Activated CD4-positive, alpha-beta T cell treated with anti-CD3 and anti-CD28 coated beads, Interleukin-2, amount 10 ng/mL, durations not matched to agents 7 days and 5 days (primary cell): ENCODE measurements at regions of chr14 and their contacts with region 1.

Region 1: GRCh38 chr14:96798956-96799355 is 1.8 kb downstream of the VRK1 start:
- DNase-seq: no peak
- H3K4me3 Mint-ChIP-seq: peak overlapping the region; percentile 87
- H3K27ac Mint-ChIP-seq: no peak overlapping the region
- H3K4me1 Mint-ChIP-seq: peaks cover 48% of the 10 kb centered on the region
- H3K27me3 Mint-ChIP-seq: no peaks in the 10 kb centered on the region

Region 2: GRCh38 chr14:96658611-96659010 is 140.3 kb before region 1 on chr14:
- CTCF ChIA-PET with region 1: no interaction called
- POLR2A ChIA-PET with region 1: no interaction called
- DNase-seq: no peak
- H3K4me3 Mint-ChIP-seq: no peak overlapping the region
- H3K27ac Mint-ChIP-seq: no peak overlapping the region
- H3K4me1 Mint-ChIP-seq: no peaks in the 10 kb centered on the region
- H3K27me3 Mint-ChIP-seq: peaks cover 27% of the 10 kb centered on the region

Region 3: DNA sequence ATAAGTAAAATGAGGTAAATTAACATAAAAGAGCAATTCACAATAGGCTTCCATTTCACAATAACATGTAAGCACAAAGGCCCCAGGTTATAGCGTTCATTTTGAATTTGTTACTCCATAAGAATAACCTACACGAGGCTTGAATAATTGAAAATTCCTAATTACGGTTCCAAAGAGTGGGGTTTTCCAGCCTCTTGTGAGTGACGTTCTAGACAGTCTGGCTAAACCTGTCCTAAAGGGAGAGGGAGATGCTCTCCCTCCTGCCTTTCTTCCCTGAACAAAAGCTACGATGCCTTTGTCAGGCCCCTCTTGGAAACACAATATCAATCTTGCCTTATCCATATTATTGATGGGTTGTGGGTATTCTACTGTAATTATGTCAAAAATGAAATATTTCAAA is 26.0 kb before region 1 on chr14:
- CTCF ChIA-PET with region 1: no interaction called
- POLR2A ChIA-PET with region 1: no interaction called
- DNase-seq: no peak
- H3K4me3 Mint-ChIP-seq: no peak overlapping the region
- H3K27ac Mint-ChIP-seq: no peak overlapping the region
- H3K4me1 Mint-ChIP-seq: no peaks in the 10 kb centered on the region
- H3K27me3 Mint-ChIP-seq: peaks cover 12% of the 10 kb centered on the region

Region 4: DNA sequence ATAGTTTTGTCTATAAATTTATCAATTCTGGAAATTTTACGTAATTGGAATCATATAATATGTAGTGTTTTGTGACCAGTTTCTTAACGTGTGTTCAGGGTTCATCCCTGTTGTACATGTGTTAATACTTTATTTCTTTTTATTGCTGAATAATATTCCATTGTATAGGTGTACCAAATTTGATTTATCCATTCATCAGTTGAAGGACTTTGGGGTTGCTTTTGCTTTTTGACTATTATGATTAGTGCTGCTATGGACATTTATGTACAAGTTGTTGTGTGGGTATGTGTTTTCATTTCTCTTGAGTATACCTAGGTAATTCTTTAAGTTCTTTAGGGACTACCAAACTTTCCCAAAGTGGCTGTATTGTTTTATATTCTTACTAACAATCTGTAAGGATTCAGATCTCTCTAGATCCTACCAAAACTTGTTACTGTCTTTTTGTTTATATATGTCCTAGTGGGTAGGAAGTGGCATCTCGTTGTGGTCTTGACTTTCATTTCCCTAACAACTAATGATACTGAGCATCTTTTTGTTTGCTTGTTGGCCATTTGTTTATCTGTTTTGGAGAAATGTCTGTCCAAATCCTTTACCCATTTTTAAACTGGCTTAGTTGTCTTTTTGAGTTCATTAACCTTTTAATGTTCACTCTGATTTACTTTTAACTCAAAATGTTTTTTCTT is 13.2 kb after region 1 on chr14:
- CTCF ChIA-PET with region 1: interaction called, 4 read pairs
- POLR2A ChIA-PET with region 1: interaction called, 15 read pairs
- DNase-seq: peak; percentile 12
- H3K4me3 Mint-ChIP-seq: no peak overlapping the region
- H3K27ac Mint-ChIP-seq: peak overlapping the region; percentile 41
- H3K4me1 Mint-ChIP-seq: peaks cover 45% of the 10 kb centered on the region
- H3K27me3 Mint-ChIP-seq: no peaks in the 10 kb centered on the region